ENCODE measurements at regions of chr2 and their contacts with region 1.

Region 1: GRCh38 chr2:225041851-225042799 is at the start of gene DOCK10:
- DNase-seq: peak; percentile 50
- H3K4me3 Mint-ChIP-seq: peak within 1 kb of the TSS; percentile 96
- H3K27ac Mint-ChIP-seq: peak within 1 kb of the TSS; percentile 98
- H3K4me1 Mint-ChIP-seq: peaks cover 58% of the 10 kb centered on the region
- H3K27me3 Mint-ChIP-seq: peaks cover 5% of the 10 kb centered on the region
- total RNA-seq, gene DOCK10: 144 and 159 TPM in 2 replicates

Region 2: DNA sequence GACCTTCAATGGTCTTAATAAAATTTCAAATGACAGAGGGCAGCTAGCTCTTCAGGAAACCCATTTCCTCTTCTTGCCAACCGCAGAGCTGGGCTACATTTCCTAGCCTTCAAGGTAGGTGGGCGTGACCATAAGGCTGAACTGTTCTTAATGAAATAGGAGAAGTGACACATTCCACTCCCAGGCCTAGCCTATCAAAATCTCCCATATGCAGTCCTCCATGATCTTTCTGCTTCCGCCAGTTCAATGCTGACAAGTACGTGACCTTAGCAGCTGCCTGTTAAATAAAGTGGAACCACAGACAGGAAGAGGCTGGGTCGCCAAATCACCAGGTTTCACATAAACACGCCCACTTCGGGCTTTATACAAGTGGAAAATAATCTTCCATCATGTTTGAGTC is 1016.3 kb before region 1 on chr2:
- intact Hi-C with region 1: loop called (anchors 10 kb)
- DNase-seq: peak; percentile 65
- H3K4me3 Mint-ChIP-seq: peak overlapping the region; percentile 51
- H3K27ac Mint-ChIP-seq: peak overlapping the region; percentile 87
- H3K4me1 Mint-ChIP-seq: peaks cover 77% of the 10 kb centered on the region
- H3K27me3 Mint-ChIP-seq: no peaks in the 10 kb centered on the region

Region 3: GRCh38 chr2:224927646-224928173 is 114.4 kb before region 1 on chr2:
- intact Hi-C with region 1: loop called (anchors 1 kb)
- DNase-seq: peak; percentile 64
- H3K4me3 Mint-ChIP-seq: peak overlapping the region; percentile 56
- H3K27ac Mint-ChIP-seq: peak overlapping the region; percentile 99
- H3K4me1 Mint-ChIP-seq: peaks cover 99% of the 10 kb centered on the region
- H3K27me3 Mint-ChIP-seq: no peaks in the 10 kb centered on the region

Region 4: GRCh38 chr2:224982910-224983711 is 59.0 kb before region 1 on chr2:
- intact Hi-C with region 1: loop called (anchors 1 kb)
- DNase-seq: peak; percentile 45
- H3K4me3 Mint-ChIP-seq: peak overlapping the region; percentile 80
- H3K27ac Mint-ChIP-seq: peak overlapping the region; percentile 96
- H3K4me1 Mint-ChIP-seq: peaks cover 86% of the 10 kb centered on the region
- H3K27me3 Mint-ChIP-seq: no peaks in the 10 kb centered on the region

Region 5: GRCh38 chr2:225025917-225026571 is 16.1 kb before region 1 on chr2:
- intact Hi-C with region 1: loop called (anchors 1 kb)
- DNase-seq: no peak
- H3K4me3 Mint-ChIP-seq: peak overlapping the region; percentile 3
- H3K27ac Mint-ChIP-seq: peak overlapping the region; percentile 64
- H3K4me1 Mint-ChIP-seq: peaks cover 67% of the 10 kb centered on the region
- H3K27me3 Mint-ChIP-seq: no peaks in the 10 kb centered on the region